ENCODE measurements at regions of chr10 and their contacts with region 1.

Region 1: GRCh38 chr10:122062831-122063674 is 74.1 kb downstream of the TACC2 start:
- DNase-seq: peak; percentile 46 to 89
- H3K4me3 ChIP-seq: no peak overlapping the region
- H3K27ac ChIP-seq: peak overlapping the region; percentile 77 to 78
- H3K4me1 ChIP-seq: peaks cover 3 to 12% of the 10 kb centered on the region in 2 donors
- H3K27me3 ChIP-seq: no peaks in the 10 kb centered on the region
- CTCF ChIP-seq: no peak

Region 2: DNA sequence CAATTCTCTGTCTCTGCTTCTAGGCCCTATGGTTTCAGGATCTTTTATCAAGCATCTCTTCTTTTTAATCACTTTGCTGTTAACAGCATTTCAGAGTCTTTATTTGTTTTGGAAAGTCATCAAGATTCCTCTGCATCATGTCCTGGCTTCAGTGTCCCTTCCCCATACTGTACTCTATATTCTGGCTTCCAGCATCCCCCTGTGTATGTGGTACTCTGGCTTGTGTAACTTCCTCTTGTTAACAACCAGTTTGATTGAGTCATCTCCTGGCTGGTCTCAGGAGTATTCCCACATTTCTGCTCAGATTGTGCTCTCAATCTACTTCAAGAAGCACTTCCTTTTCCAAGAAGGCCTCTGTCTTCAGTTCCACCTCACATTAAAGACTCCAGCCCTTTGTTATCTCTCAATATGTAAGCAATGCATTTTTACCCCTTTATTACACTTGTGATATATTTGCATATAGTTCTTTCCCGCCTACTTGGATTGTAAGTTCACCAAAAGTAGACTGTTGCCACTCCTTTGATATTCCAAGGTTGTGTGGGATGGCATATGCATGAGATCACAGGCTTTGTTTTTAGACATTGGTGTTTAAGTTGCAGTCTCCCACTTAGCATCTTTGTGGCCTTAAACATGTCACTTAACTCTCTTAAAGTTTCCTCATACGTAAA is 120.2 kb before region 1 on chr10:
- intact Hi-C with region 1: no loop called
- DNase-seq: peak in 1 of 2 donors; percentile 62
- H3K4me3 ChIP-seq: no peak overlapping the region
- H3K27ac ChIP-seq: peak overlapping the region in 1 of 2 donors; percentile 33
- H3K4me1 ChIP-seq: peaks cover 0 to 4% of the 10 kb centered on the region in 2 donors
- H3K27me3 ChIP-seq: no peaks in the 10 kb centered on the region
- CTCF ChIP-seq: no peak

Region 3: DNA sequence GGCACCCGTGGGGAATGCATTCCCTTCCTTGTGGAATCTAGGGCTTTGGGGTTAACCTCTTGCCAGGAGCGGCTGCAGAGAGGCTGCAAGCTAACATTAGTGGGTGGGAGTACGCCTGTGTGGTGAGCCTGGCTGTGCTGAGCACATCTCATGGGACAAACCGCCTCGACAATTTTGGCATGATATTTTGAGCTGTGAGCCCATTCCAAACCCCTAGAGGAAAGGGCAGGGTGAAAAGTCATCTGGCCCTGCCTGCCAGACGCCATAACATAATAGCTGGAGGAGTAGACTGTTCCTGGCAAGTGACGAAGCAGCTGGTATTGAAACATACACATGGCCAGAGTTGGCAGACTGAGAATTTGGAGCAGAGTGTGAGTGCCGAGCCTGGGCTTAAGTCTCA is 35.9 kb after region 1 on chr10:
- intact Hi-C with region 1: loop called (anchors 2 kb)
- DNase-seq: peak in 1 of 2 donors; percentile 85
- H3K4me3 ChIP-seq: no peak overlapping the region
- H3K27ac ChIP-seq: peak overlapping the region; percentile 62 to 77
- H3K4me1 ChIP-seq: peaks cover 4 to 37% of the 10 kb centered on the region in 2 donors
- H3K27me3 ChIP-seq: no peaks in the 10 kb centered on the region
- CTCF ChIP-seq: no peak